Testis (tissue), 5 donors: ENCODE measurements at regions of chr5 and their contacts with region 1.

Region 1: GRCh38 chr5:179345433-179346321 is at the start of gene ADAMTS2:
- DNase-seq: peak; percentile 77
- H3K4me3 ChIP-seq: peak within 1 kb of the TSS; percentile 69 to 77
- H3K27ac ChIP-seq: peak within 1 kb of the TSS; percentile 40 to 69
- H3K4me1 ChIP-seq: peaks cover 17% of the 10 kb centered on the region
- H3K27me3 ChIP-seq: no peaks in the 10 kb centered on the region
- CTCF ChIP-seq: no peak
- POLR2A ChIP-seq: no peak
- total RNA-seq, gene ADAMTS2: 13.6 to 19.8 TPM

Region 2: DNA sequence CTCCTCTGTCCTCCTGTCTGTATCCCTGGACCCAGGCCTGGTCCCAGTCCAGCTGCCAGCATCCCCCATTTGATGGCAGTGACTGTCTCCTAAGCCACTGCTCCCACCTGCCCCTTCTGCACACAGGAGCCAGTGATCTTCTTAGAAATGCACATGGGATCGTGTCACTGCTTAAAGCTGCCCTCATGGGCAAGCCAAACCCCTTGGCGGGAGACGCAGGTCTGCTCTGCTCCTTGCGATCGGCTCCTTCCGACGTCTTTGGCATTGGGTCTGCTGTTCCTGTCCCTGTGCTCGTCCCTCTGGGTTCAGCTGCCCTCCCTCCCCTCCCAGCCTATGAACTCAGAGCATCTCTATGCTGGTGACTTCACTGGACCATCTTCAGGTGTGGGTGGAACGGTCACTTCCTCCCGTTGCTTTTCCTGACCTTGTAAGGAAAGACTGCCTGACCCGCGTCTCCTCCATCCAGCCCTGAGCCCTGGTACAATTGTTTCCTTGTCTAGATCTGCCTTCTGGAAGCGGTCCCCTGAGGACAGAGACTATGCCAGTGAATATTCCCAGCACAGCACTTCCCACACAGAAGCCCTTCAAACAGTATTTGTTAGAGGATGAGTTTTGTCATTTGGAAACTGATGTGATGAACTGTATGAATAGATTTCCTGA is 169.0 kb before region 1 on chr5:
- intact Hi-C with region 1: loop called (anchors 10 kb)
- DNase-seq: peak; percentile 51
- H3K4me3 ChIP-seq: no peak overlapping the region
- H3K27ac ChIP-seq: no peak overlapping the region
- H3K4me1 ChIP-seq: no peaks in the 10 kb centered on the region
- H3K27me3 ChIP-seq: no peaks in the 10 kb centered on the region
- CTCF ChIP-seq: no peak
- POLR2A ChIP-seq: no peak